Thyroid gland (tissue), 4 donors: ENCODE measurements at regions of chr6 and their contacts with region 1.

Region 1: DNA sequence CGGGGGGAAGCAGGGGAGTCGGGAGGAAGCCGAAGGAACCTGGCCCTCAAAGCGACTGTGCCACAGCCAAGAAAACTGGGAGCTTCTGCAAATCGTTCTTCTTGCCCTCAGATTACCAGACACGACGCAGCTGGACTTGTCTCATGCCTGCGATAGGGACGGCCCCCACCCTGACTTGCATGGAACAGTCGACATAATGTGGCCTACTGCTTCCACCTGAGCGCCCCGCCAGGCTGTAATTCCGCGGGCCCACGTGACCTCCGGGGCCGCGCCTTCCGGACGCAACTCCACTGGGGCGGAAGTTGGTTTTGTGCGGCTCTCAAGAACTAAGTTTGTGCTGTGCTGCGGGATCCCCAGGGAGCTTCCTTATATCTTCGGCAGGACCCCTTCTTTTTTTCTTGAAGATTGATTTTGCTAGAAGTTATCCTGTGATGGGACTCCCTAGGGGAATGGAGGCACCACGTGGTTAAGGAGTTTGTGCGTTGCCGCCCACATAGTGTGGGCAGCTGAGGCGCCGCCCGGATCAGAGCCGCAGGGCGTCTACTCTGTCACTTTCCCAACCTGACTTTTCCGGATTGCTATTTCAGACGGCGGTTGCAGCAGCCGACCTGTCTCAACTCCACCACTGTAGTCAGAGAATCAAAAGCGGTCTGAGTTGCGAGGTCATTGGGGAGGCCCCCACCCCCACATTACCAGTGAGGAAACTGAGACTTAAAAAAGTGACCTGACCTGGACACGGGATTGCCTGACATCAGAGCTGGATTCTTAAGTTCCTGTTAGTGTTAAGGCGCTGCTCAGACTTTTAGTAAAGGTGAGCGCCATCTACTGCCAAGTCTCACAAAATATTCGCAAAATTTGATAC is 540 bp upstream of the CD164 start:
- DNase-seq: peak; percentile 95
- H3K4me3 ChIP-seq: peak overlapping the region; percentile 28 to 98 (median 65)
- H3K27ac ChIP-seq: peak overlapping the region; percentile 95 to 100 (median 99)
- H3K4me1 ChIP-seq: peaks cover 27 to 31% of the 10 kb centered on the region in 2 donors
- H3K27me3 ChIP-seq: no peaks in the 10 kb centered on the region
- CTCF ChIP-seq: peak in 4 of 6 experiments; percentile 57 to 80 (median 69)
- POLR2A ChIP-seq: peak in 1 of 2 donors; percentile 66

Region 2: DNA sequence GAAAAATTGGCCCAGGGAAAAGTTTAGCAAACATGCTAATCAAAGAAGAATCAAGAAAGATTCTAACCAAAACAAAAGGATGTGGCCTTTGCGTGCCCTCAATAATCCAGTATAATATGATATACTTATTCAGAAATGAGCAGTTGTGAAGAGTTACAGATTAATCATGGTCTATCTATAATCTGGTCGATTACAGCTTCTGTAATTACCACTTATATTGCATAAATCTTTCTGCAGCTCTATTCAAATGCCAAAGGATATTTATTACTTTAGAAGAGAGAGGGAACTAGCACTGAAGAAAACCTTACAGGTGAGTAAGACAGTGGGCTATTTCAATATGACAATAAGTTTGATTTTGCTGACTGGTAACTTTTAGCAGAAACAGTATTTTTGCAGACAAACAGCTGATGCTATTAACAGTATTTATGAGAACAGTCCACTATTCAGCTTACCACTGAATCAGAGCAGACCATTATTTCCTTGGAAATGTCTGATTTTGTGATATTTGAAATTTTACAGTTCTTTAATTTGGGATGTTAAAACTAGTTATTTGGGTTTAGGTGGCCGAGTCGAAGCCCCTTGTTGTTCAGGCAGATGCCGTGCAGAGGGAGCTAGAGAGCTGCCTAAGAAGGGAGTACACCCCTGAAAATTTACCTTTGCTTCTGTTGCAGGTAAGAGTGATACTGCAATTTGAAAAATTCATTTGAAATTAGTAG is 195.2 kb before region 1 on chr6:
- intact Hi-C with region 1: loop called (anchors 5 kb)
- DNase-seq: peak; percentile 58 to 67
- H3K4me3 ChIP-seq: no peak overlapping the region
- H3K27ac ChIP-seq: no peak overlapping the region
- H3K4me1 ChIP-seq: peaks cover 0 to 3% of the 10 kb centered on the region in 2 donors
- H3K27me3 ChIP-seq: no peaks in the 10 kb centered on the region
- CTCF ChIP-seq: peak; percentile 70 to 96 (median 92)
- POLR2A ChIP-seq: no peak

Region 3: DNA sequence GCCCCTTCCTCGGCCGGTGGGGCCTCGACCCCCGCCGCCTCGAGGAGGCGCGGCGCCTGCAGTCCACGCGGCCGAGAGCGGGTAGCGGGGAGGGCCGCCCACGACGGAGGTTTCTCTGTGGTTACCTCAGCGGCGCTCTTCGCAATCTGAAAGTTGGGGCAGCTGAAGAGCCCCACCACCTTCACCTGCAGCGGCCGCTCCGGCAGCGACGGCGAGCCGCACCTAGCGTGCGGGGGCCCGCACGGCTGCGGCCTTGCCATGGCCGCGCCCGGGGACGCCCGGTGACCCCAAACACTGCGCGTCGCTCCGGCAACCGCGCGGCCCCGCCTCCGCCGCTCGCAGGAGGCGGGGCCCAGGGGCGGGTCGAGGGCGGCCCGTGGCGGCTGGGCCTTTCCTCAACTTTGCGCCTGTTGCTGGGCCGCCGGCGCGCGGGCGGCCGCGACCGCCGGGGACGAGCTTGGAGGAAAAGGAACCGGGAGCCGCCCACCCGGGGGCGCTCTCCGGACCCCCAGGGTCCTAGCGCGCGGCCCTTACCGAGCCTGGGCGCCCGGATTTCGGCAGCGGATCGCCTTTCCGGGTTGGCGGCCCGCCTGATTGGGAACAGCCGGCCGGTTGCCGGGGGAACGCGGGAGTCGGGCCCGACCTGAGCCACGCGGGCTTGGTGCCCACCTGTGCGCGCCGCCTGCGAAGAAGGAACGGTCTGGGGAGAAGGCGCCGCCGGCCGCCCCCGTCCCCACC is 57.7 kb after region 1 on chr6 and contains the starts of genes PPIL6 and SMPD2:
- intact Hi-C with region 1: loop called (anchors 10 kb)
- DNase-seq: peak; percentile 90 to 91
- H3K4me3 ChIP-seq: peak within 1 kb of the TSS; percentile 27 to 97 (median 53)
- H3K27ac ChIP-seq: peak within 1 kb of the TSS; percentile 80 to 91 (median 85)
- H3K4me1 ChIP-seq: peaks cover 10% of the 10 kb centered on the region in 2 donors
- H3K27me3 ChIP-seq: no peaks in the 10 kb centered on the region
- CTCF ChIP-seq: peak in 4 of 6 experiments; percentile 12 to 32 (median 28)
- POLR2A ChIP-seq: peak; percentile 50 to 85
- total RNA-seq, gene PPIL6: 20.1 to 31.2 (median 27.0) TPM
- total RNA-seq, gene SMPD2: 11.2 to 60.9 (median 17.8) TPM